ENCODE measurements at regions of chr7 and their contacts with region 1.

Region 1: DNA sequence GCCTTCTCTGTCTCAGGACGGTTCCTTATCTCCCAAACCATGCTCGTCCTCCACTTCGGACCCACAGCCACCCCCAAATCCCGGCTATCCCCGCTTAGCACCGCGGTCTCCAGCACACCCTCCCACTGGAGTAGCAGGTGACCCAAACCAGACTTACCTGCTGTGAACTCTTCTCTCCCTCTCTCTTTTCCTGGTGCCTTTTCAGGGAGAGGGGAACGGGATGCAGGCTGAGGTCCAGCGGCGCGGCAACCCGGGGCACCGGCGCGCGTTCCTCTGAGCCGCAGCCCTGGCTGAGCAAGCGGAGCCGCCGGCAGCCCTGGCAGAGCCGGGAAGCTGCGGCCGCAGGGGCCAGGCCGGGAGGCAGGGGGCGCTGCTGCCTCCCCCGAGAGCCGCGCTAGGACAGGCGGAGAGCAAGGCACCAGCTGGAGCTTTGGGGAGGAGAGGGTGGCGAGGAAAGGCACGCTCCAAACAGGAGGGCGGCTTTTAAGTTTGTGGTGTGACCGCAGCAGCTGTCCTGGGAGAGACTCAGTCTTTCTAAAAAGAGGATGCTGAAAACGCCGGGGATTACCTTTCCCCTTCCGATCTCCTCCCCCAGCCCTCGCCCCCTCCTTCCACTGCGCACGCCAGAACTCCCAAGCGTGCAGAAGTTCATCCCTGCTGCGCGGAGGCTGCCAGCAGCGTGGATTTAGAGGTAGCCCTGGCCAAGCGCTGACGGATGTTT is at the start of gene SEMA3D:
- DNase-seq: peak; percentile 84
- H3K4me3 Mint-ChIP-seq: peak within 1 kb of the TSS; percentile 96
- H3K27ac Mint-ChIP-seq: peak within 1 kb of the TSS; percentile 22
- H3K4me1 Mint-ChIP-seq: no peaks in the 10 kb centered on the region
- H3K27me3 Mint-ChIP-seq: no peaks in the 10 kb centered on the region
- CTCF ChIP-seq: peak; percentile 77
- total RNA-seq, gene SEMA3D: 0.91 and 2.0 TPM in 2 replicates

Region 2: GRCh38 chr7:85464042-85464651 is 277.5 kb after region 1 on chr7:
- CTCF ChIA-PET with region 1: interaction called, 3 read pairs
- intact Hi-C with region 1: loop called (anchors 5 kb)
- DNase-seq: no peak
- H3K4me3 Mint-ChIP-seq: no peak overlapping the region
- H3K27ac Mint-ChIP-seq: no peak overlapping the region
- H3K4me1 Mint-ChIP-seq: peaks cover 14% of the 10 kb centered on the region
- H3K27me3 Mint-ChIP-seq: no peaks in the 10 kb centered on the region
- CTCF ChIP-seq: no peak

Region 3: GRCh38 chr7:85554236-85555178 is 367.8 kb after region 1 on chr7:
- CTCF ChIA-PET with region 1: no interaction called
- intact Hi-C with region 1: loop called (anchors 2 kb)
- DNase-seq: peak; percentile 34
- H3K4me3 Mint-ChIP-seq: no peak overlapping the region
- H3K27ac Mint-ChIP-seq: peak overlapping the region; percentile 36
- H3K4me1 Mint-ChIP-seq: peaks cover 23% of the 10 kb centered on the region
- H3K27me3 Mint-ChIP-seq: no peaks in the 10 kb centered on the region
- CTCF ChIP-seq: no peak

Region 4: DNA sequence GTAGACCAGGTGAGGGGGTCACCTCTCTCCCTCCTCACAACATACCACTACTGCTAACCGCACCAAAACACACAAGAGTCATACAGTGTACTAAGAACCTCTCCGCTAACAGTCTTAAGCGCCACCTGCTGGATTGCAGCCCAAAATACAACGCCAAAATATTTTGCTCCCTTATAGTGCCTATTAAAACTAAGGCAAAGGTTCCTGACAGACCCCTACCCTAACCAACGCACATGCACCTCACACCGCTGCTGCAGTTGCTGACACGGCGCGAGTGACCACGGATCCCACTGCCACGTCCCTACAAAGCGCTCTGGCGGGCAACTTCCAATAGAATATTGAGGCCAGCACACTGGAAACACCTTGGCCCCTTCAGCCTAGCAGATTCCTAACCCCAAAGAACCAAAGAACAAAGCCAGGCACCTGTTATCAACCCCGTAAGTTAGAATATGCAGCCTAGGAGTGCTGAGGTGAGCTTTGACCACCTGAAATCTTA is 563.8 kb after region 1 on chr7:
- CTCF ChIA-PET with region 1: no interaction called
- intact Hi-C with region 1: loop called (anchors 5 kb)
- DNase-seq: peak; percentile 34
- H3K4me3 Mint-ChIP-seq: no peak overlapping the region
- H3K27ac Mint-ChIP-seq: no peak overlapping the region
- H3K4me1 Mint-ChIP-seq: peaks cover 10% of the 10 kb centered on the region
- H3K27me3 Mint-ChIP-seq: no peaks in the 10 kb centered on the region
- CTCF ChIP-seq: peak; percentile 56

Region 5: DNA sequence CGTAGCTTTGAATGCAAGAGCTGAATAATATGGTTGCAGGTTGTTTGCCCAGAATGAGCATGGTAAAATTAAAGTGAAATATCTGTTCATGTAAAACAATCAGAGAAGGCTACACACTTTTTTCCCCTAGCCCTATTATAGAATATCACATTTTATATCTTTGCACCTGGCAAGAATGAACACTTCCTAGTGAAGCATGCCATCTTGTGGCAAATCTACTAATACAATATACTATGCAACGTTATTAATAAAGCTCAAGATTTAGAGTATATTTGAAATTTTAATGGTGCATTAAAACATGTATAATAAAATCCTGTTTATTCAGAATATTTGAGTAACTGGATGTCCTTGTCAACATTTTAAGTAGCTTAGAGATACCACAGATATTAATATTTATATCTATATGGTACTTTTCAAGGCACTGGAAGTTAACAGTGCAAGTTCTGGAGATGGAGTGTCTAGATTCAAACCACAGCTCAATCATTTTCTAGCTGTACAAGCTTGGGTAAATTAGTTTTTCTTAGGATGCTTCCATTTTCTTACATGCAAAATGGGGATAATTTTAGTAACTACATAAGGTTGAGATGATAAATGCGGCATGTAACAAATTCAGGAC is 643.2 kb after region 1 on chr7:
- CTCF ChIA-PET with region 1: interaction called, 10 read pairs
- intact Hi-C with region 1: loop called (anchors 5 kb)
- DNase-seq: no peak
- H3K4me3 Mint-ChIP-seq: no peak overlapping the region
- H3K27ac Mint-ChIP-seq: no peak overlapping the region
- H3K4me1 Mint-ChIP-seq: no peaks in the 10 kb centered on the region
- H3K27me3 Mint-ChIP-seq: no peaks in the 10 kb centered on the region
- CTCF ChIP-seq: no peak

Region 6: DNA sequence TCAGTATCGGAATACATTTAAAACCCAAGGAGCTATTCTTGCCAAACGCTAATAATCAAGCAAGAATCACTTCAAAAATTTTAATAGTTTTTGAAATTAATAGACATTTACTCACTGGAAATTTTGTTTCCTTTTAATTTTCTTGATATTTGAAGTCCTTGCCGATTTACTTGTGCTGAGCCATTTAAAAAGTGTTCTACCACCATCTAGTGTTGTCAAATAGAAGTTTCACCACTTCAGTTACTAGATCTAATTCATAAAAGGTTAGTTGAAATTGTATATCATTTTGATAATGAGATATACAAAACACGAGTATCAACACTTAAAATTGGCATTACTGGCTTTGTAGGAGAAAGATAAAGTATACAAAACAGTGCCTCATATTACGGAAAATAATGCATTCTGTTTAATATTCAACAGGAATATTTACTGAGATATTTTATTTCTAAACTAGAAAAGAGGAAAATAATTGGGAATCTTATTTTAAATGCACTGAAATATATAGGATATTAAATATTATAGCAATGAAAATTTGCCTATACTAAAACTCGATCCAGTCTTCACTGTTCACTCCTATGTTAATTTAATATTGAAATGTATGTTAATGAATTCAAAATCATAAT is 665.0 kb after region 1 on chr7:
- CTCF ChIA-PET with region 1: no interaction called
- intact Hi-C with region 1: loop called (anchors 5 kb)
- DNase-seq: no peak
- H3K4me3 Mint-ChIP-seq: no peak overlapping the region
- H3K27ac Mint-ChIP-seq: no peak overlapping the region
- H3K4me1 Mint-ChIP-seq: no peaks in the 10 kb centered on the region
- H3K27me3 Mint-ChIP-seq: no peaks in the 10 kb centered on the region
- CTCF ChIP-seq: peak; percentile 14

Measured in Calu3 (cell line).